Naive thymus-derived CD4-positive, alpha-beta T cell (primary cell): ENCODE measurements at regions of chr6 and their contacts with region 1.

Region 1: DNA sequence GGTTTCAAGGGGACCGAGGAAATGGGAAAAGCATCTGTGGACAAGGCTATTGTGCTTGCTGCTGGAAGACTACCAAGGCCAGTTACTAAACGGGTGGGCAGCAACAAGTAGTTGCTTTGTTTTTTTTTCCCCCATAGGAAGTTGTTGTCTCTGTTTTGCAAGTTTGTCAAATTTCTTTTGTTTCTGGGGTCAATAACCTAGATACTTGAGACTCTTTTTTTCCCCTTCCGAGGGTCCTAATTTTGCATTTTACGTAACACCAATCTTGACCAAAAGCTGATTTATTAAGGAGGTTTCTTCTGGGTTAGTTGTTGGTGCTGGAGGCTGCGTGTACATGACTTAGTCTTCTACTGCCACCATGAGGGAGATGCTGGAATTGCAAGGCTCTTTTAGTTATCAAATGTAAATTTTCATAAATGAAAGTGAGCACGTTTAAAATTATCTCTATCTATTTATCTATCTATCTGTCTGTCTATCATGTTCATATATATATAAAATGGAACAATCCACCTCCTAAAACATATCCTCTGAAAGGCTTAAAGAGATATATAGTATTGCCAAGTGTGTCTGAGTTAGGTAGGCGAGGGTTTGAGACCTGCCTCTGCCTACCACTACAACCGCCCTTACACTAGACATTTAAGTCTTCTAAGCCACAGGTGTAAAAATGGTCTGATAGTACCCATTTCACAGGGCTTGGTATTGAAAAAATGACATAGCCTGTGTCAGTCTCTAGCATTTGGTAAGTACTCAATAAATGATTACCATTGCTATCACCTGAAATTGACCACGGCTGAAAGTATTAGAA is 60.2 kb downstream of the GCLC start:
- DNase-seq: peak; percentile 28 to 74 (median 60)
- ATAC-seq: peak; percentile 86
- H3K4me3 ChIP-seq: no peak overlapping the region
- H3K4me3 Mint-ChIP-seq: no peak overlapping the region
- H3K27ac ChIP-seq: no peak overlapping the region
- H3K27ac Mint-ChIP-seq: no peak overlapping the region
- H3K4me1 ChIP-seq: no peaks in the 10 kb centered on the region
- H3K4me1 Mint-ChIP-seq: peaks cover 0 to 19% (median 0%) of the 10 kb centered on the region in 7 donors
- H3K27me3 ChIP-seq: no peaks in the 10 kb centered on the region
- H3K27me3 Mint-ChIP-seq: peaks cover 20 to 34% (median 25%) of the 10 kb centered on the region in 5 donors

Region 2: GRCh38 chr6:52125139-52125538 is 1359.5 kb before region 1 on chr6:
- CTCF ChIA-PET with region 1: no interaction called
- POLR2A ChIA-PET with region 1: no interaction called
- intact Hi-C with region 1: no loop called
- DNase-seq: no peak
- ATAC-seq: no peak
- H3K4me3 ChIP-seq: no peak overlapping the region
- H3K4me3 Mint-ChIP-seq: no peak overlapping the region
- H3K27ac ChIP-seq: no peak overlapping the region
- H3K27ac Mint-ChIP-seq: no peak overlapping the region
- H3K4me1 ChIP-seq: no peaks in the 10 kb centered on the region
- H3K4me1 Mint-ChIP-seq: no peaks in the 10 kb centered on the region
- H3K27me3 ChIP-seq: no peaks in the 10 kb centered on the region
- H3K27me3 Mint-ChIP-seq: peaks cover 24 to 58% (median 54%) of the 10 kb centered on the region in 5 donors

Region 3: DNA sequence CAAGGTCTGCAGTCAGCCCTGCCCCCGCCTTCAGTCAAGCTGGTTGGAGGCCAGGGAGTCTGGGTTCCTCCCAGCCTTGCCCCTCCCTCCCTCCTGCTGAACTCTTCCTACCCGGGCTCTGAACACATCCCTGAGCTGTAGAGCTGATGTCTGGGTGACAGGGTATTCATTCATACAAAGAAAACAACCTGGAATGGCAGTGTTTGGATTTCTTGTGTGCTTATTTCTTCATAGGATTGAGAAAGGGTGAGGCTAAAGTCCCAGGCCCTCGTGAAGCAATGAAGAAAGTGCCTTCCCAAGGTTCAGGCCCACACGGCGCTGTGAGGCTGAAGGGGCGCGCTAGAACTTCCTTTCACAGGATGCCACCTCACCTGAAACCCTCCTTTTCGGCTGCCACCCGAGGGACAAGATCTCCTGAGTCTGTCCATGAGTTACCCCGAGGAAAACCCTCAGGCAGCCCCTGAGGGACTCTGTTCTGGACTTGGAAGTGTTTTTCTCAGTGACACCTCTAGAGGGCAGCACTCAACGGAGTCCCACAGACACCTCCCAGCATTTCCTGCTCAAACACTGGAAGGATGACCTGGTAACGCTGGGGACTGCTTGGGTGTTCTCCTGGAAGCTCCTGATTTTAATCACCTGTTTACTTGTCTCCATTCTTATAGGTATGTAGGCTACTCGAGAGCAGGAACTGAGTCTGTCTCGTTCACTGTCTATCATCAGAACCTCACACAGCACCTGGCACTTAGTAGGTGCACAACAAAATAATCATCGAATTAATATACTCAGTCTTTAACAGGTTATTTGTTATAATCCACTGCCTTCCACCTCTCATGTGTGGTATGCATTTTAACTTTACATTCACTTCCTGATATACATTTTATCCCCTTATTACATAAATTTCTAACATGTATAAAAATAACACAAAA is 669.2 kb before region 1 on chr6:
- CTCF ChIA-PET with region 1: no interaction called
- POLR2A ChIA-PET with region 1: no interaction called
- intact Hi-C with region 1: loop called in 1 of 2 experiments (anchors 5 kb)
- DNase-seq: peak in 7 of 9 donors; percentile 9 to 47 (median 27)
- ATAC-seq: peak; percentile 84
- H3K4me3 ChIP-seq: no peak overlapping the region
- H3K4me3 Mint-ChIP-seq: no peak overlapping the region
- H3K27ac ChIP-seq: no peak overlapping the region
- H3K27ac Mint-ChIP-seq: no peak overlapping the region
- H3K4me1 ChIP-seq: no peaks in the 10 kb centered on the region
- H3K4me1 Mint-ChIP-seq: no peaks in the 10 kb centered on the region
- H3K27me3 ChIP-seq: no peaks in the 10 kb centered on the region
- H3K27me3 Mint-ChIP-seq: peaks cover 0 to 19% (median 9%) of the 10 kb centered on the region in 5 donors

Region 4: DNA sequence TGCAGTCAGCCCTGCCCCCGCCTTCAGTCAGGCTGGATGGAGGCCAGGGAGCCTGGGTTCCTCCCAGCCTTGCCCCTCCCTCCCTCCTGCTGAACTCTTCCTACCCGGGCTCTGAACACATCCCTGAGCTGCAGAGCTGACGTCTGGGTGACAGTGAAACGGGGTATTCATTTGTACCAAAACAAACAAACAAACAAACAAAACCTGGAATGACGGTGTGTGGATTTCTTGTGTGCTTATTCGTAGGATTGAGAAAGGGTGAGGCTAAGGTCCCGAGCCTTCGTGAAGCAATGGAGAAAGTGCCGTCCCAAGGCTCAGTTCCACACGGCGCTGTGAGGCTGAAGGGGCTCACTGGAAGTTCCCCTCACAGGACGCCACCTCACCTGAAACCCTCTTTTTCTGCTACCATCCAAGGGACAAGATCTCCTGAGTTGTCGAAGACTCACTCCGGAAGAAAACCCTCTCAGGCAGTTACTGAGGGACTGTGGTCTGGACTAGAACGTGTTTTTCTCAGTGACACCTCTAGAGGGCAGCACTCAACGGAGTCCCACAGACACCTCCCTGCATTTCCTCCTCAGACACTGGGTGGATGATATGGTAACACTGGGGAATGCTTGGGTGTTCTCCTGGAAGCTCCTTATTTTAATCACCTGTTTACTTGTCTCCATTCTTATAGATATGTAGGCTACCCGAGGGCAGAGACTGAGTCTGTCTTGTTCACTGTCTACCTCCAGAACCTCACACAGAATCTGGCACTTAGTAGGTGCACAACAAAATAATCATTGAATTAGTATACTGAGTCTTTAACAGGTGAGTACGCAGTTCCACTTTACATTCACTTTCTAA is 602.5 kb before region 1 on chr6:
- CTCF ChIA-PET with region 1: no interaction called
- POLR2A ChIA-PET with region 1: no interaction called
- intact Hi-C with region 1: loop called (anchors 1 to 5 kb)
- DNase-seq: peak; percentile 29 to 74 (median 61)
- ATAC-seq: peak; percentile 99
- H3K4me3 ChIP-seq: peak overlapping the region; percentile 57
- H3K4me3 Mint-ChIP-seq: peak overlapping the region; percentile 85 to 92 (median 88)
- H3K27ac ChIP-seq: no peak overlapping the region
- H3K27ac Mint-ChIP-seq: peak overlapping the region in 8 of 9 donors; percentile 7 to 86 (median 58)
- H3K4me1 ChIP-seq: no peaks in the 10 kb centered on the region
- H3K4me1 Mint-ChIP-seq: peaks cover 0 to 13% (median 0%) of the 10 kb centered on the region in 7 donors
- H3K27me3 ChIP-seq: no peaks in the 10 kb centered on the region
- H3K27me3 Mint-ChIP-seq: no peaks in the 10 kb centered on the region

Region 5: DNA sequence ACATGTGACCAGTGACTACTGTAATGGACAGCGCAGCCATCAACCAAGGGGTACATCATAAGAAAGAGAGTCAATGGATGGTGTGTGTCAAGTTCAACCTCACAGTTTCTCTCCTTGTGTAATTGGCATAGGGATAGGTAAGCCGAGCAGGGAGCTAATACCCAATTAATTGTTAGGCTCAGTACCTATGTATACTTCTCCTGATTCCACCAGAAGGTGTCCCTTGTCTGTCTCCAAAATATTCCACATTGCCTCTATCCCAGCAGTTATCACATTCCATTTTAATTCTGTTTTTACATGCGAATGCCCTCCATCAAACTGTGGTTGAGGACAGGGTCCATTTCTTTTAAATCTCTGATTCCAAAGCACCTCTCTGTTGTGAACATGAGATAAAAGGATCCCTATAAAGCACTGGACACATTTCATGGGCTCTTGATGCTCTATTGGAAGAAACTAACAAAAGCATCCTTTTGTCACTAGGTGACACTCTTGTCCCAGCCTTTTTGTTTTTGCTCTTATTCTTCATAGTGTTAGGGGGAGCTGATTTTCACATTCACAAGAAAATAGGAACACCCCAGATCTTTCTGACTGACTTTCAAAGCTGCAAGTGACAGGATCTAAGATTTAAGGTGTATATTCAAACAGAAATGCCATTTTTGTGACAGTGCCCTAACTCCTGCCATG is 380.5 kb before region 1 on chr6:
- CTCF ChIA-PET with region 1: interaction called, 3 read pairs
- POLR2A ChIA-PET with region 1: no interaction called
- intact Hi-C with region 1: loop called in 1 of 2 experiments (anchors 2 kb)
- DNase-seq: peak in 1 of 9 donors; percentile 1
- ATAC-seq: no peak
- H3K4me3 ChIP-seq: no peak overlapping the region
- H3K4me3 Mint-ChIP-seq: no peak overlapping the region
- H3K27ac ChIP-seq: no peak overlapping the region
- H3K27ac Mint-ChIP-seq: no peak overlapping the region
- H3K4me1 ChIP-seq: no peaks in the 10 kb centered on the region
- H3K4me1 Mint-ChIP-seq: no peaks in the 10 kb centered on the region
- H3K27me3 ChIP-seq: no peaks in the 10 kb centered on the region
- H3K27me3 Mint-ChIP-seq: no peaks in the 10 kb centered on the region

Region 6: DNA sequence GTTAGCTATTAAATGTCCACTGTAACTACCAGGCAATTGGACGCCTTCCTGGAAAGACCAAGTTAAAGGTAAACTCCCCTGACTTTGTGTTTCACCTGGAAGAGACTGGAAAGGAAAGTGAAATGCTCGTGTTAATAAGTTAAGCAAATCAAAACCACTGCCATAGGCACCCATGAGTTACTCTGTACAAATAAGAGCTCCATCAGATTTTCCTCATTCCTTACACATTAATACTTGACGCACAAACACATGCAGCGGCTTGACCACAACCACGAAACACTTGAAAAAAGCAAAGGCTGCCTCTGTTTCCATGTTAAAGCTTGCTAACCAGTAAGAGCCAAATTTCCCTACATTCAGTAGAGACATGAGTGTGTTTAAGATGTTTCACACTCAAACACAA is 355.8 kb before region 1 on chr6:
- CTCF ChIA-PET with region 1: no interaction called
- POLR2A ChIA-PET with region 1: no interaction called
- intact Hi-C with region 1: no loop called
- DNase-seq: no peak
- ATAC-seq: no peak
- H3K4me3 ChIP-seq: no peak overlapping the region
- H3K4me3 Mint-ChIP-seq: no peak overlapping the region
- H3K27ac ChIP-seq: no peak overlapping the region
- H3K27ac Mint-ChIP-seq: no peak overlapping the region
- H3K4me1 ChIP-seq: no peaks in the 10 kb centered on the region
- H3K4me1 Mint-ChIP-seq: no peaks in the 10 kb centered on the region
- H3K27me3 ChIP-seq: no peaks in the 10 kb centered on the region
- H3K27me3 Mint-ChIP-seq: peaks cover 8 to 27% (median 14%) of the 10 kb centered on the region in 5 donors

Region 7: DNA sequence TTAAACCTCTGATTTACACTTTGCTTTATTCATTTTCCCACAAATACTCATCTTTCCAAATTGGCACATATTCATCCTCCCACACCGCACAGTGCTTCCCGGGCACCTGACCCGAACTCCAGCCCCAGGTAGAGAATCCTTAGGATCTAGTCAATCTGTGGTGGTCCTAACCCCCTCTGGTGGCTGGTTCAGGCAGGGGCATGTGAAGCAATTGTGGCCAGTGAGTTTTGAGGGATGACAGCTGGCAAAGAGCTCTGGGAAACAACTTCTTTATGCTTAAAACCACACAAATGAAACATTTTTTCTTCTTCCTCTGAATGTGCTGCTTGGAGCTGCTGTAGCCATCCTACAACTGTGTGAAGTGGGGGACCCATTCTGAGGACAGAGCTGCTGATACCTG is 190.6 kb before region 1 on chr6:
- CTCF ChIA-PET with region 1: no interaction called
- POLR2A ChIA-PET with region 1: no interaction called
- intact Hi-C with region 1: loop called in 1 of 2 experiments (anchors 1 kb)
- DNase-seq: peak in 1 of 9 donors; percentile 7
- ATAC-seq: no peak
- H3K4me3 ChIP-seq: no peak overlapping the region
- H3K4me3 Mint-ChIP-seq: peak overlapping the region in 1 of 10 donors; percentile 10
- H3K27ac ChIP-seq: no peak overlapping the region
- H3K27ac Mint-ChIP-seq: peak overlapping the region in 8 of 9 donors; percentile 41 to 86 (median 74)
- H3K4me1 ChIP-seq: peaks cover 35 to 41% of the 10 kb centered on the region in 2 donors
- H3K4me1 Mint-ChIP-seq: peaks cover 46 to 94% (median 83%) of the 10 kb centered on the region in 7 donors
- H3K27me3 ChIP-seq: no peaks in the 10 kb centered on the region
- H3K27me3 Mint-ChIP-seq: no peaks in the 10 kb centered on the region

Region 8: GRCh38 chr6:53410508-53411258 is 74.0 kb before region 1 on chr6:
- CTCF ChIA-PET with region 1: interaction called, 10 read pairs
- POLR2A ChIA-PET with region 1: no interaction called
- intact Hi-C with region 1: loop called (anchors 1 kb)
- DNase-seq: peak; percentile 21 to 72 (median 63)
- ATAC-seq: peak; percentile 98
- H3K4me3 ChIP-seq: no peak overlapping the region
- H3K4me3 Mint-ChIP-seq: no peak overlapping the region
- H3K27ac ChIP-seq: no peak overlapping the region
- H3K27ac Mint-ChIP-seq: peak overlapping the region in 1 of 9 donors; percentile 22
- H3K4me1 ChIP-seq: peaks cover 0 to 3% of the 10 kb centered on the region in 2 donors
- H3K4me1 Mint-ChIP-seq: peaks cover 0 to 6% (median 3%) of the 10 kb centered on the region in 7 donors
- H3K27me3 ChIP-seq: no peaks in the 10 kb centered on the region
- H3K27me3 Mint-ChIP-seq: peaks cover 0 to 5% (median 0%) of the 10 kb centered on the region in 5 donors